Heart left ventricle (tissue), 16 donors: ENCODE measurements at regions of chr9 and their contacts with region 1.

Region 1: DNA sequence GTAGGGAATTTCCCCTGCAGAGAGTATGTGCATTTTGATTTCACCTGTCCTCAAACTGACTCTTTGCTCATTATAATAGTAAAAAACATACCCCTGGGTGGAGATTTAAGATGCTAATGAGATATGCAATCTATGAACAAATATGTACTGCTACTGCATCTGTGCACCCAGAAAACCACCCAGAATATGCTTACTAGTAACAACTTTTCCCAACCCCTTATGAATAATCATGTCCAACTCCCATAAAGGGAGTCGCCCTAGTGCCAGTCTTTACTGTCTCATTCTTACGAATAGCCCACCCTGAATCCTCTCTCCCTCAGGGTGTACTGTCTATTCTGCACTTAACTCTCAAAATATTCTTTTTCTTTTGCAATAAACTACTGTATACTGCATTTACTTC is 39.0 kb upstream of the ZFP37 start:
- DNase-seq: no peak
- ATAC-seq: no peak
- H3K4me3 ChIP-seq: no peak overlapping the region
- H3K27ac ChIP-seq: no peak overlapping the region
- H3K4me1 ChIP-seq: no peaks in the 10 kb centered on the region
- H3K27me3 ChIP-seq: peaks cover under 1 to 79% (median 37%) of the 10 kb centered on the region in 9 donors
- CTCF ChIP-seq: no peak
- POLR2A ChIP-seq: no peak

Region 2: GRCh38 chr9:112921549-112921948 is 174.0 kb before region 1 on chr9:
- intact Hi-C with region 1: loop called in 2 of 10 experiments (anchors 10 kb)
- DNase-seq: no peak
- ATAC-seq: peak in 3 of 4 donors; percentile 61 to 76 (median 62)
- H3K4me3 ChIP-seq: no peak overlapping the region
- H3K27ac ChIP-seq: no peak overlapping the region
- H3K4me1 ChIP-seq: no peaks in the 10 kb centered on the region
- H3K27me3 ChIP-seq: peaks cover 0 to 6% (median 0%) of the 10 kb centered on the region in 9 donors
- CTCF ChIP-seq: peak in 10 of 12 donors; percentile 16 to 65 (median 46)
- POLR2A ChIP-seq: no peak

Region 3: DNA sequence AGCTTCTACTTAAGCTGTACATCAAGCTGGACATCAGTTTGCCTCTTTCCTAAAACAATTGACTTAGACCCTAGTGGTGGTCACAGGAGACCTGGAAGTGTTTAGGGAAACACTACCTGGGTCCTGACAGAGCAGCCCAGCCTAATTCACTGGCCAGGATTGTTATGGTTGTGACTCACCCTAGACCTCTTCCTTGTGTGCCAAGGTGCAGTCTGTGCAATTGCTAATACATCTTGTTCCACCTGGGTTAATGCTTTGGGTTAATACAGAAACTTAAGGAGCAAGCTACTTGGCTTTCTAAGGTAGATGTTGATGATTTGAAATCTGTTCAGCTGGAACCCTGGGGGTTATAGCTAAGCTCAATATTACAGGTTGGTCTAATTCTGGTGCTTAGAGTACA is 156.1 kb before region 1 on chr9:
- intact Hi-C with region 1: loop called in 2 of 10 experiments (anchors 10 kb)
- DNase-seq: no peak
- ATAC-seq: no peak
- H3K4me3 ChIP-seq: no peak overlapping the region
- H3K27ac ChIP-seq: no peak overlapping the region
- H3K4me1 ChIP-seq: no peaks in the 10 kb centered on the region
- H3K27me3 ChIP-seq: peaks cover 0 to 14% (median 0%) of the 10 kb centered on the region in 9 donors
- CTCF ChIP-seq: no peak
- POLR2A ChIP-seq: no peak